GM13977 (cell line): ENCODE measurements at regions of chr5 and their contacts with region 1.

Region 1: DNA sequence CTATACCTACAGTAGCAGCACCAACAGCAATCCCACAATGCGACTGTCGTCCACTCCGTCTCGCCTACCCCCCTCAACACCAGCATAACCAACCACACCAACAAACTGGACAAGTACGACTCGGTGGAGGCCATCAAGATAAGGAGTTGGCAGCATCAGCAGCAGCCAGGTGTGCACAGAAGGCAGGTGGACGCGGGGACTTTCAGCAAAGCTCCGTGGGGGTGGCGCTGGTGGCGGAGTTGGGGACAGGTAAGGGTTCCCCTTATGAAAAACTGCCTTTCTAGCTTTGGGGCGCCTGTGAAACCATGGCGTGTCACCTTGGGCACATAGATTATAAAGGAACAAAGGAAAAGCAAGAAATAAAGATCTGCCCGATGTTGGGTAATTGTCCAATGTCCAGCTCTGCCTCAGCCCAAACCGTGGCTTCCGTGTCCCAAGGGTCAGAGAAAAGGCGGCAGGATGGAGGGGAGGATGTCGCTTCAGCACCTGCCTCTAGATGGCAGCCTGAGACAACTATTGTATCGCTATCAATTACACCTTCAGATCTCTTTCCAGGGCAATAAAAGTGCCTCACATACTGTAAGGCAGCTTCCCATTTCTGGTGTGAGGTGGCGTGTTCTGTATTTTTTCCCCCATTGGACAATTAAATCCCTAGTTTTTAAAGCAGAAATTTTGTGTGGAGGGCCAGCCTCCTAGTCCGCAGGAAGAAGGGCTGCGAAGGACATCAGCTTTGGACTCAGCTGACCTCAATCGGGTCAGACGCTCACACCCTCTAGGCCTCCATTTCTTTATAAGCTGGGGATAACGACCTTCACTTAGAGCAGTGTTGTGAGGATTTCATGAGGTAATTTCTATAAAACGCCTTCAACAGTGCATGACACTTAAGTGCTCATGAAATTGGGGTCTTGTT is 58.8 kb downstream of the MTRR start:
- DNase-seq: peak; percentile 69
- CTCF ChIP-seq: peak; percentile 88

Region 2: GRCh38 chr5:8184455-8185063 is 256.8 kb after region 1 on chr5:
- in situ Hi-C with region 1: loop called (anchors 25 kb)
- DNase-seq: peak; percentile 44
- CTCF ChIP-seq: peak; percentile 88